CD4-positive, alpha-beta T cell (primary cell): ENCODE measurements at regions of chr13 and their contacts with region 1.

Region 1: DNA sequence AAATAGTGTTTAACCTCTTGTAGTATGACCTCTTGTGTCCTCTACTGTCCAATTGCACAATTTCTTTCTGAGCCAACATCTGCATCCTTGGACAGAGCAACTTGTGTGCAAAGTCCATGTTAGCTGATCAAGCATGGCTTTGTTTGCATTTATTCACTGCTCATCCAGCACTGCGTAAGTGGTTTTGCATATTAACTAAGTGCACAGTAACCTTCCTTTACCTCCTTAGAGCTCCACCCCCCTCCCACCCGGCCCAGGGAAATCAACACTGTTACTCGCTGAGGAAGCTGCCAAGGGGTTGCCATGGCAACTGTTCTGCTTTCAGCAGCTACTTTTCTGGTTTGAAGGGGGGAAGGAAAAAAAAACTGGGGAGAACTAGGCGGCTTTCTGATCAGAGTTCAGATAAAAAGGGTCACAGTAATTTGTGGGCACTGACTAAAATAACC is 153.5 kb upstream of the KLF12 start:
- DNase-seq: peak; percentile 71 to 98 (median 83)
- ATAC-seq: peak; percentile 70
- H3K4me3 ChIP-seq: peak overlapping the region; percentile 39
- H3K4me3 Mint-ChIP-seq: peak overlapping the region; percentile 80
- H3K27ac ChIP-seq: peak overlapping the region; percentile 78 to 82
- H3K27ac Mint-ChIP-seq: peak overlapping the region; percentile 84
- H3K4me1 ChIP-seq: peaks cover 39% of the 10 kb centered on the region
- H3K4me1 Mint-ChIP-seq: peaks cover 68% of the 10 kb centered on the region
- H3K27me3 ChIP-seq: no peaks in the 10 kb centered on the region
- H3K27me3 Mint-ChIP-seq: no peaks in the 10 kb centered on the region
- CTCF ChIP-seq: no peak

Region 2: DNA sequence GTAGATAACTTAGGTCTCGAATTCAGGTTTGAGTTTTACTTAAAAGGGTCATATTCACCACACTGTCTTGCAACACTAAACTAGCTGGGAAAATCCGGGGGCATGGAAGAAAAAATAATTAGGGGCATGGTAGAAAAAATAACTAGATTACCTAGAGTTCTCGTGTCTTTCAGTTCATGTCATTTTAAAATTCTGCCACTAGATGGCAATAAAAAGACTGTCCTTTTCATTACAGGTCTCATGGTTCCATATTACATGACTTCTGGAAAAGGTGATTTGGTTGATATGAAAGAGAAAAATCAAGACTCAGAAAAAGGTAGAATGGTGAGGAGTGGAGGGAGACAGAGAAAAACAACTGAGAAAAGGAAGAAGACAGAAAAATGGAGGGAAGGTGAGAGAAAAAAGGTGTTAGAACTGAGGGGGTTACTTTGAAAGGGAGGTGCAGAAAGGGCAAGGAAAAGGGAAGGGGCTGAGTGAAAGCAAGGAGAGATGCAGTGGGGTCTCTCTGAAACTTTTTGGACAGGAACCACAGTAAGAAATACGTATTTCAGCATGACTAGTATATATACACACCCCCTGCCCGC is 452.5 kb before region 1 on chr13:
- CTCF ChIA-PET with region 1: interaction called, 10 read pairs
- POLR2A ChIA-PET with region 1: interaction called, 7 read pairs
- intact Hi-C with region 1: loop called (anchors 1 to 5 kb)
- DNase-seq: peak in 3 of 14 experiments; percentile 65 to 69 (median 68)
- ATAC-seq: peak; percentile 73
- H3K4me3 ChIP-seq: no peak overlapping the region
- H3K4me3 Mint-ChIP-seq: no peak overlapping the region
- H3K27ac ChIP-seq: no peak overlapping the region
- H3K27ac Mint-ChIP-seq: no peak overlapping the region
- H3K4me1 ChIP-seq: peaks cover 7% of the 10 kb centered on the region
- H3K4me1 Mint-ChIP-seq: peaks cover 59% of the 10 kb centered on the region
- H3K27me3 ChIP-seq: no peaks in the 10 kb centered on the region
- H3K27me3 Mint-ChIP-seq: no peaks in the 10 kb centered on the region
- CTCF ChIP-seq: peak; percentile 81

Region 3: DNA sequence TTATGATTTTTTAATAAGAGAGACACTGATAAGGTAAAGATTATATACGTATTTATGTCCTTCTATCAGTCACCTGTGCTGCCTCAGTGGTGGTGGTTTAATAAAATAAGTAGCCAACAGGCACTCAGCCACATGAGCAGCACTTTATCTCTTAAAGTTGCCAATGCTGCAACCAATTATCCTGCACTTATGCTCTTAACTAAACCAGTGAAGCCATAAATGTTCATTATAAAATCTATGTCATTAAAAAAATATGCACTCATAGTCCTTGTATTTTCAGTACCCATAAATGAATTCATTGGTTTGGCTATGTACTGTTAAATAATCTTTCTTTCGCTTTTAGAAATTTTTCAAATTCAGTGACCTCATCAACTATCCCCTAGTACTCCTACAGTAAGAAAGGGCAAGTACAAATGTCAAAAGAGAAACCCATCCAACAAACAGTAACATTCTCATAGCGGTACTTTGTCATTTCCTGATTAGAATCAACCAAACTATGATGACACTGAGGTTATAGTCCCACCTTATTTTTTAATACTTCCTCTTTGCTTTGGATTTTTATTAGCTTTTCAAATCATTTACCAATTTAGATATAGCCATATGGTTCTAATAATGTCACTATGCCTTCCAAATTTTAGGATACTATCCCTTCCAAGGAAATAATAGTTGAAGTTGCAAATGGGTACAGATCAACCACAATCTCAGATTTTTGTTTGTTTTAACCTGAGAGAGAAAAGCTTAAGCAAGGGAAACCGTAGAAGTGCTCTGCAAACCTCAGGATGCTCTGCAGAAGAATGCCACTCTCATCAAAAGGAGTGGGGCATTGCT is 344.4 kb before region 1 on chr13:
- CTCF ChIA-PET with region 1: no interaction called
- POLR2A ChIA-PET with region 1: interaction called, 6 read pairs
- intact Hi-C with region 1: loop called (anchors 1 to 5 kb)
- DNase-seq: peak in 3 of 14 experiments; percentile 56 to 83 (median 60)
- ATAC-seq: peak; percentile 92
- H3K4me3 ChIP-seq: no peak overlapping the region
- H3K4me3 Mint-ChIP-seq: peak overlapping the region; percentile 47
- H3K27ac ChIP-seq: peak overlapping the region; percentile 57 to 82
- H3K27ac Mint-ChIP-seq: peak overlapping the region; percentile 87
- H3K4me1 ChIP-seq: peaks cover 34% of the 10 kb centered on the region
- H3K4me1 Mint-ChIP-seq: peaks cover 89% of the 10 kb centered on the region
- H3K27me3 ChIP-seq: no peaks in the 10 kb centered on the region
- H3K27me3 Mint-ChIP-seq: no peaks in the 10 kb centered on the region
- CTCF ChIP-seq: no peak

Region 4: DNA sequence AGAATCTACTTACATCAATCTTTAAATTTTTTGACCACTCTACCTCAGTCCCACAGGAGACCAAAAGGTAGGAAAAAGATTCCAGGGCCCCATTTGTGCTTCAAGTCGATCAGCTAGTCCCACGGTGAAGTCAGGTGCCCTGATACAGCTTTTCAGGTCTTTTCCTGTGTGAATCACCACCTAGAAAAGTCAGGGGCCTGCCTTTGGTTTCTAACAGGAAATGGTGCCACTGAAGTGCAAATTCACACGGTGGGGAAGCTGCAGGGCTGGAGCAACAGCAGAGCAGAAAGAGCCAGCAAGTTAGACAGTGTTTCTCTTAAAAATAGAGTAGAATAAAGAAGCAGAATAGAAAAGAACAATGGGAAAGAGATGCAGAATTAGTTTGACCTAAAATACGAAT is 261.0 kb before region 1 on chr13:
- CTCF ChIA-PET with region 1: interaction called, 13 read pairs
- POLR2A ChIA-PET with region 1: interaction called, 16 read pairs
- intact Hi-C with region 1: loop called in 1 of 2 experiments (anchors 5 kb)
- DNase-seq: peak; percentile 44 to 88 (median 66)
- ATAC-seq: peak; percentile 95
- H3K4me3 ChIP-seq: peak overlapping the region; percentile 29
- H3K4me3 Mint-ChIP-seq: peak overlapping the region; percentile 82
- H3K27ac ChIP-seq: peak overlapping the region; percentile 66 to 78
- H3K27ac Mint-ChIP-seq: peak overlapping the region; percentile 89
- H3K4me1 ChIP-seq: peaks cover 11% of the 10 kb centered on the region
- H3K4me1 Mint-ChIP-seq: peaks cover 90% of the 10 kb centered on the region
- H3K27me3 ChIP-seq: no peaks in the 10 kb centered on the region
- H3K27me3 Mint-ChIP-seq: no peaks in the 10 kb centered on the region
- CTCF ChIP-seq: no peak

Region 5: GRCh38 chr13:74070065-74070464 is 217.7 kb before region 1 on chr13:
- CTCF ChIA-PET with region 1: interaction called, 4 read pairs
- POLR2A ChIA-PET with region 1: interaction called, 11 read pairs
- intact Hi-C with region 1: loop called (anchors 1 to 5 kb)
- DNase-seq: peak in 10 of 14 experiments; percentile 6 to 86 (median 33)
- ATAC-seq: peak; percentile 85
- H3K4me3 ChIP-seq: peak overlapping the region; percentile 1
- H3K4me3 Mint-ChIP-seq: peak overlapping the region; percentile 73
- H3K27ac ChIP-seq: peak overlapping the region; percentile 17 to 36
- H3K27ac Mint-ChIP-seq: peak overlapping the region; percentile 80
- H3K4me1 ChIP-seq: peaks cover 55% of the 10 kb centered on the region
- H3K4me1 Mint-ChIP-seq: peaks cover 83% of the 10 kb centered on the region
- H3K27me3 ChIP-seq: no peaks in the 10 kb centered on the region
- H3K27me3 Mint-ChIP-seq: no peaks in the 10 kb centered on the region
- CTCF ChIP-seq: no peak

Region 6: DNA sequence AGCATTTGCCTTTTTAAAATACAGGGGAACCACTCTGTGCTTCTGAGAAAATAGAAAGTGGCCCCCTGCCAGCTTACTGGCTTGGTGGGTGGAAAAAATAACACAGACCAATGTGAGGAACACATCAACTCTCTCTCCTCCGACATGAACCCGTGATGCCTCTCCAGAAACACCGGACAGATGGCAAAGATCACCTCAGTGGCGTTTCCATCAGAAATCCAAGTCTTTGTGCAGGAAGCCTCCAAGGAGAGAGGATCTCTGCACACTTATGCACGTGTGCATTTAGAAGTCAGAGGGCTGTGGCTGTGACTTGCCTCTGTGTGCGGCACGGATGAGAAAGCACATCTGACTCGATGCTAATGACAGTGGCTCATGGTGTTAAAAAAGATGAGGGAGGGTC is 41.3 kb before region 1 on chr13:
- CTCF ChIA-PET with region 1: interaction called, 6 read pairs
- POLR2A ChIA-PET with region 1: interaction called, 32 read pairs
- intact Hi-C with region 1: loop called (anchors 2 to 5 kb)
- DNase-seq: peak in 5 of 14 experiments; percentile 13 to 44 (median 27)
- ATAC-seq: no peak
- H3K4me3 ChIP-seq: peak overlapping the region; percentile 13
- H3K4me3 Mint-ChIP-seq: peak overlapping the region; percentile 68
- H3K27ac ChIP-seq: peak overlapping the region; percentile 59 to 78
- H3K27ac Mint-ChIP-seq: peak overlapping the region; percentile 91
- H3K4me1 ChIP-seq: peaks cover 71% of the 10 kb centered on the region
- H3K4me1 Mint-ChIP-seq: peaks cover 95% of the 10 kb centered on the region
- H3K27me3 ChIP-seq: no peaks in the 10 kb centered on the region
- H3K27me3 Mint-ChIP-seq: no peaks in the 10 kb centered on the region
- CTCF ChIP-seq: no peak

Region 7: GRCh38 chr13:74675182-74675581 is 387.4 kb after region 1 on chr13:
- CTCF ChIA-PET with region 1: no interaction called
- POLR2A ChIA-PET with region 1: no interaction called
- intact Hi-C with region 1: no loop called
- DNase-seq: no peak
- ATAC-seq: no peak
- H3K4me3 ChIP-seq: no peak overlapping the region
- H3K4me3 Mint-ChIP-seq: no peak overlapping the region
- H3K27ac ChIP-seq: no peak overlapping the region
- H3K27ac Mint-ChIP-seq: no peak overlapping the region
- H3K4me1 ChIP-seq: no peaks in the 10 kb centered on the region
- H3K4me1 Mint-ChIP-seq: no peaks in the 10 kb centered on the region
- H3K27me3 ChIP-seq: no peaks in the 10 kb centered on the region
- H3K27me3 Mint-ChIP-seq: peaks cover 5% of the 10 kb centered on the region
- CTCF ChIP-seq: no peak